ENCODE measurements at regions of chr2 and their contacts with region 1.

Region 1: DNA sequence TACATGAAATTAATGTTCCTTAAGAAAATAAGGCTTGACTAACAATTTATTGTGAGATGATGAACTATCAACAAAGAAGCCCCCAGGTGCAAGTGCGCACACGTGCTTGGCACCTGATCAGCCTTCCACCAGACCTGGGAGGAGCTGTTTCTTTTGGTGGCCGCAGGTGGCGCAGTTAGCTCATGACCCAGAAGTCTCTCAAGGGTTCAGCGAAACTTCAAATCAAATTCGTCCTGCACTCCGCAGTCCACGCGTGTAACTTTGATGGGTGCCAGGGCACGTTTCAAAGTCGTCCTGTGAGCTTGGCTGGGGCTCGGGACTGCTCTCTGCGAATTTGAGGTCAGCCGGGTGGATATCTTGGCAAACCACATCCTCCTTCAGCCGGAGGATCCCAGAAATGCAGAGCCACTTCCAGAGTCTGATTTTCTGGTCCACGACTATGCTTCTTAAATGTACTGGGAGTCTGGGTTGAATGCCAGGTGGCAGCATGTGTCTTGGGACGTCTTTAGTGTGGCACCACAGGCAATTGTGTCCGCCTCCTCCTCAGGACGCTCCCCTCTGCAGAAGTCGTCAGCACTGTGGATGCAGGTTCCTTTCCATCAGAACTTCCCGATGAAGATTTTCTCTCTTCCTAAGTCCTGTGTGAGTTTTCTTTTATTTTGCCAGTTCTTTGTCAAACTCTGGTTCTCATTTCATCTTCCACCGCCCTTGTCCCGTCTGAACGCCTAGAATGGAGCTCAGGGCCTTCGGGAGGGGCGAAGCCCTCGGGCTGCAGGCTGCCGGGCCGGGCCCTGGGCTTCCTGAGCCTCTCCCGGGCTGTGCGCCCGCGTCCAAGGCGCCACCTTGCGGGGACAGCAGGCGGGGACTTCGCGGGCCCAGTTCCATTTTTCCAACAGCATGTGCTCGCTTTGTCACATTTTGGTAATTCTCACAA is 61.3 kb upstream of the RAPGEF4 start:
- DNase-seq: peak; percentile 41
- ATAC-seq: peak; percentile 82
- H3K4me3 Mint-ChIP-seq: peak overlapping the region; percentile 37
- H3K27ac Mint-ChIP-seq: no peak overlapping the region
- H3K4me1 Mint-ChIP-seq: peaks cover 2% of the 10 kb centered on the region
- H3K27me3 Mint-ChIP-seq: no peaks in the 10 kb centered on the region
- CTCF ChIP-seq: no peak

Region 2: GRCh38 chr2:172588931-172589330 is 85.4 kb before region 1 on chr2:
- CTCF ChIA-PET with region 1: interaction called, 14 read pairs
- POLR2A ChIA-PET with region 1: no interaction called
- intact Hi-C with region 1: no loop called
- DNase-seq: no peak
- ATAC-seq: no peak
- H3K4me3 Mint-ChIP-seq: no peak overlapping the region
- H3K27ac Mint-ChIP-seq: no peak overlapping the region
- H3K4me1 Mint-ChIP-seq: peaks cover 47% of the 10 kb centered on the region
- H3K27me3 Mint-ChIP-seq: no peaks in the 10 kb centered on the region
- CTCF ChIP-seq: no peak